ENCODE measurements at regions of chr10 and their contacts with region 1.

Region 1: DNA sequence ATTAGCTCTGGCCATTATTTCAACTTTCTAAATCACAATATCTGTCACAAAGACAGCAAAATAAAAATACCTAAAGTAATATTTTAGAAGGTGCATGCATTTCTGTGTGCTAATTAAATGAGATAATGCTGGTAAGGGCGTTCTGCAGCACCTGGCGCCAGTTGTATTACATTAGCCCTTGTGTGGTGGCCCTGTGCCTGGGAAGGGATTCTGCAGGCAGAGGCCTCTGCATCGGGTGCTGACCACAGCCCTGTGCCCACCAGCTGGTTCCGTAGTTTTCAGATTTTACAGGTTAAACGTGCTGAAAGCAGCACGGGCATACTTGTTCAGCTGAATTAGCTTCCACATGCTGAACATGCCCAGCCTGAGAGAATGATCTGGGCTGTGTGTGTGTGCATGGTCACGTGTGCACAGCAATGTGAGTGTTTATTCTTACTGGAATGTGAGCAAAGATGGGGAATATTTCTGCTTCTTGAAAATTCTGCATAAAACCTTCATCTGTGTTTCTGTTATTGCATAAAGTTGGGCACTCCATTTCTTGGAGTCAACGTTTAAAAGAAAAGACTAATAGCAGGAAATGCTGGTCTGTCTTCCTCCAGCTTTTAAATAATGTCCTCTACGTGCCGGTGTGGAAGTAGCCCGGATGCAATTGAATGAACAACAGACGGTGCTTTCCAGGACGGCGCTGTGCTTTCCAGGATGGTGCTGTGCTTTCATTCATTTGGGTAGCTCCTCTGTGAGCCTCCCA is 157.9 kb upstream of the PRKCQ start:
- DNase-seq: peak; percentile 63
- H3K4me3 Mint-ChIP-seq: peak overlapping the region; percentile 77
- H3K27ac Mint-ChIP-seq: peak overlapping the region; percentile 23
- H3K4me1 Mint-ChIP-seq: peaks cover 21% of the 10 kb centered on the region
- H3K27me3 Mint-ChIP-seq: no peaks in the 10 kb centered on the region
- CTCF ChIP-seq: no peak

Region 2: GRCh38 chr10:6748978-6749635 is 11.2 kb after region 1 on chr10:
- CTCF ChIA-PET with region 1: no interaction called
- POLR2A ChIA-PET with region 1: interaction called, 26 read pairs
- intact Hi-C with region 1: no loop called
- DNase-seq: peak; percentile 61
- H3K4me3 Mint-ChIP-seq: peak overlapping the region; percentile 13
- H3K27ac Mint-ChIP-seq: peak overlapping the region; percentile 68
- H3K4me1 Mint-ChIP-seq: peaks cover 40% of the 10 kb centered on the region
- H3K27me3 Mint-ChIP-seq: no peaks in the 10 kb centered on the region
- CTCF ChIP-seq: no peak

Region 3: GRCh38 chr10:6778992-6779701 is 41.2 kb after region 1 on chr10:
- CTCF ChIA-PET with region 1: no interaction called
- POLR2A ChIA-PET with region 1: interaction called, 76 read pairs
- intact Hi-C with region 1: loop called (anchors 1 kb)
- DNase-seq: peak; percentile 99
- H3K4me3 Mint-ChIP-seq: peak overlapping the region; percentile 76
- H3K27ac Mint-ChIP-seq: peak overlapping the region; percentile 98
- H3K4me1 Mint-ChIP-seq: peaks cover 65% of the 10 kb centered on the region
- H3K27me3 Mint-ChIP-seq: no peaks in the 10 kb centered on the region
- CTCF ChIP-seq: no peak

Region 4: DNA sequence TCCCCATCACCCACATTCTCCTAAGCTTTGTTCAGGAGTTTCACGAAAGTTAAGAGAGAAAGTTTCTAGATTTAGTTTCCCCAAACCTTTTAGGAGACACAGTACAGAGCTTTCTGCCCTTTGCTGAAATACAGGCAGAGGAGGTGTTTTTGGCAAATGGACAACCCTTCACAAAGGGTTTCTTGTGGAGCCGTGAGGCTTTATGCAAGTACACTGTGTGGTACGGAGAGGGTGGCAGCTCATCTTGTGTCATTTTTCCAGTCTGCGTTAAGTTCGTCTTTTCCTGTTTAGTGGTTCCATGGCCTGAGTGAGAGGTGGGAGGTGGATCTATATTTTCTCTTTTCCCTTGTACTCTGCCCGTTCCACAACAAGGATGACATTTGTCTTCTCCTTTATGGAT is 57.6 kb after region 1 on chr10:
- CTCF ChIA-PET with region 1: no interaction called
- POLR2A ChIA-PET with region 1: interaction called, 11 read pairs
- intact Hi-C with region 1: no loop called
- DNase-seq: no peak
- H3K4me3 Mint-ChIP-seq: peak overlapping the region; percentile 31
- H3K27ac Mint-ChIP-seq: peak overlapping the region; percentile 84
- H3K4me1 Mint-ChIP-seq: peaks cover 28% of the 10 kb centered on the region
- H3K27me3 Mint-ChIP-seq: no peaks in the 10 kb centered on the region
- CTCF ChIP-seq: no peak

Region 5: GRCh38 chr10:6912424-6912823 is 174.5 kb after region 1 on chr10:
- CTCF ChIA-PET with region 1: interaction called, 3 read pairs
- POLR2A ChIA-PET with region 1: interaction called, 31 read pairs
- intact Hi-C with region 1: no loop called
- DNase-seq: peak; percentile 89
- H3K4me3 Mint-ChIP-seq: no peak overlapping the region
- H3K27ac Mint-ChIP-seq: no peak overlapping the region
- H3K4me1 Mint-ChIP-seq: peaks cover 5% of the 10 kb centered on the region
- H3K27me3 Mint-ChIP-seq: no peaks in the 10 kb centered on the region
- CTCF ChIP-seq: no peak